ENCODE measurements at regions of chr2 and their contacts with region 1.

Region 1: DNA sequence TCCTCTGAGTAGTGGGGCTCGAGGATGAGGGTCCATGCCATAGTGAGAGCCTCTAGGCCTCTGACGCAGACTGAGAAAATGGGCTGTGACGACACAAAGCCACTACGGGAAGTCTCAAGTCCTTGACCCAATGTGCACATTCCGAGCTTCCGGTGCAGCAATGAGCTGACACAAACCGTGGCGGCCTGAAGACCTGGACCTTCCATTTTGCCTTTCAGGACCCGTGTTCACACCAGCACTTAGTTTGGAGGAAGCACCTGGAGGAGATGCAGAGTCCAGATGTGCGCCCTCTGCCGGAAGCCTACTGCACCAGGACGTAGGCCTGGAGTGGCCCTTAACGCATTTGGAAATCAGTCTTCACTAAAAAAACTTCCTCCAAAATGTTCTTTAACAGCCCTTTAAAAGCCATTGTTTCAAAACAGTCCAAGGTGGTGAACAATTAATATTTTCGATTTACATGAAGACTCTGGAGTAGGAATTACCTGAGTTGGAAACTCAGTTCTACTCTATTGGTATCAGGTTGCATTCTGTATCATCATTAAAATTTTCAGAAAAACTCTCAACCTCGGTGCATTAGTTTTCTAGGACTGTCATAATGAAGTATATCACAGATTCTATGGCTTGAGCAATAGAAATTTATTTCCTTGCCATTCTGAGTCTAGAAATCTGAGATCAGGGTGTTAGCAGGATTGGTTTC is 33.9 kb downstream of the BMP10 start:
- DNase-seq: peak; percentile 66 to 76
- ATAC-seq: peak; percentile 86 to 96
- H3K4me3 ChIP-seq: no peak overlapping the region
- H3K27ac ChIP-seq: no peak overlapping the region
- H3K4me1 ChIP-seq: peaks cover 5% of the 10 kb centered on the region; the same call in 2 of the 3 replicates
- CTCF ChIP-seq: peak; percentile 78
- EP300 ChIP-seq: no peak
- POLR2A ChIP-seq: no peak
- RAD21 ChIP-seq: peak; percentile 50 to 51; a peak in 4 of 5 replicates

Region 2: GRCh38 chr2:68813596-68813995 is 23.7 kb before region 1 on chr2:
- CTCF ChIA-PET with region 1: interaction called, 19 read pairs
- POLR2A ChIA-PET with region 1: no interaction called
- DNase-seq: no peak
- ATAC-seq: no peak
- H3K4me3 ChIP-seq: no peak overlapping the region
- H3K27ac ChIP-seq: no peak overlapping the region
- H3K4me1 ChIP-seq: 0 out of 3 replicates have a peak, but pooled peaks cover 8% of the 10 kb centered on the region
- CTCF ChIP-seq: no peak
- EP300 ChIP-seq: no peak
- POLR2A ChIP-seq: no peak
- RAD21 ChIP-seq: no peak

Region 3: DNA sequence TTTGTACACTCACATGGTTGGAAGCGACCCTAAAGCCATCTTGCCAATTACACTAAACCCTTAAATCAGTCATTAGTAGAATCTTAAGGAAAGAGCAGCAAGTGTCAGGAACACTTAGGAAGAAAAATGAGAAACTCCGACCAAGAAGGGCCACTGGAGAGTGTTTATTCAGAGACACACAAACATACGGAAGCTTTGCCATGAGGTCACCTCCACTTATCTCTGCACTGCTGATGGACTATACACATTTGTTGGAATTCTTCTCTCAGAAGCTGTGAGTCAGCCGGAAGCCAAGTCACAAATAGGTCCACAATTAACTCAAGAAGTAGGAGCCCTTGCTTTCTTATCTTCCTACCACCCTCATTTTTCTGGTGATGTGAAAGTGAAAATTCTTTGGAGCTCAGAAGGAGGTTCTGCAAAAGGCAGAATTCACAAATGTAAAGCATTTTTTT is 12.3 kb after region 1 on chr2:
- CTCF ChIA-PET with region 1: interaction called, 15 read pairs
- POLR2A ChIA-PET with region 1: no interaction called
- DNase-seq: peak in 1 of 2 experiments; percentile 41
- ATAC-seq: peak; percentile 46 to 56; a peak in 2 of 6 replicates
- H3K4me3 ChIP-seq: no peak overlapping the region
- H3K27ac ChIP-seq: no peak overlapping the region
- H3K4me1 ChIP-seq: no peaks in the 10 kb centered on the region
- CTCF ChIP-seq: no peak
- EP300 ChIP-seq: no peak
- POLR2A ChIP-seq: no peak
- RAD21 ChIP-seq: no peak

Region 4: DNA sequence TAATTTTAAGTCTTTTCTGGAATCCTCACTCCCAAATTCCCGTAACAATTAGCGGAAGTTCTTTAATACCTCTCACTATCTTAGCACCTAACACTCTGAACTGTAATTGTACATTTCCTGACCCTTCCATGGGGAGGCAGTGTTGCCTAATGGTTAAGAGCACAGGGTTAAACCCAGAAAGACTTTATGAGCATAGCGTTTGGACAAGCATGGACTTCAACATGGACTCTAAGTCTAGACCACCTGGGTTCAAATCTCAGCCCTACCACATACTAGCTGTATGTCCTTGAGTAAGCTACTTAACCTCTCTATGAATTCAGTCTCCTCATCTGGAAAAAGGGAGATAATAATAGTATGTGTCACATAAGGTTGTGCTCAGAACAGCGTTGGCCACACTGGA is 188.7 kb after region 1 on chr2:
- CTCF ChIA-PET with region 1: no interaction called
- POLR2A ChIA-PET with region 1: no interaction called
- DNase-seq: peak in 1 of 2 experiments; percentile 56
- ATAC-seq: peak in 1 of 2 experiments; percentile 26; a peak in 3 of 6 replicates
- H3K4me3 ChIP-seq: no peak overlapping the region
- H3K27ac ChIP-seq: no peak overlapping the region
- H3K4me1 ChIP-seq: peaks cover 41% of the 10 kb centered on the region
- CTCF ChIP-seq: peak; percentile 50
- EP300 ChIP-seq: no peak
- POLR2A ChIP-seq: no peak
- RAD21 ChIP-seq: peak; percentile 69 to 72